ENCODE measurements at regions of chr4 and their contacts with region 1.

Region 1: DNA sequence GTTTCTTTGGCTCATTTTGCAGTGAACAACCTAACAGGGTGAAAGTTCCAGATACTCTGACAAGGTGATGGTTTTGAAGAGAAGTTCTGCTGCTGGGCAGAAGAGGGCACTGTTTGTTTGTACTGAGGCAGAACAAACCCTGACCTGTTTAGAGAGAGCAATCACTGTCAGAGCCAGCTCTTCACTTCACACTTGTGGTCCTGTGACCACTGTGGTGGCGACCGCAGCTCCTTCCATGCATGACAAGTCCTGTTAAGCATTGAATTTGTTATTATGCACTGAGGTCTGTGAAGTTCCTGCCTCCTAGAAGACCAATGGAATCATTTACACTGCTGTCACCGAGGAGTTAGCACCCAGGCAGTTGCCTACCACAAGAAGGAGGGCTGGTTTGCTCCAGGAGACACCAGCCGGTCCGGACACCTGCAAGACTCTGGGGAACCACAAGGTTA is 86.6 kb downstream of the ZNF330 start:
- DNase-seq: peak; percentile 74
- H3K4me3 Mint-ChIP-seq: no peak overlapping the region
- H3K27ac Mint-ChIP-seq: no peak overlapping the region
- H3K4me1 Mint-ChIP-seq: peaks cover 2% of the 10 kb centered on the region
- H3K27me3 Mint-ChIP-seq: peaks cover 6% of the 10 kb centered on the region

Region 2: DNA sequence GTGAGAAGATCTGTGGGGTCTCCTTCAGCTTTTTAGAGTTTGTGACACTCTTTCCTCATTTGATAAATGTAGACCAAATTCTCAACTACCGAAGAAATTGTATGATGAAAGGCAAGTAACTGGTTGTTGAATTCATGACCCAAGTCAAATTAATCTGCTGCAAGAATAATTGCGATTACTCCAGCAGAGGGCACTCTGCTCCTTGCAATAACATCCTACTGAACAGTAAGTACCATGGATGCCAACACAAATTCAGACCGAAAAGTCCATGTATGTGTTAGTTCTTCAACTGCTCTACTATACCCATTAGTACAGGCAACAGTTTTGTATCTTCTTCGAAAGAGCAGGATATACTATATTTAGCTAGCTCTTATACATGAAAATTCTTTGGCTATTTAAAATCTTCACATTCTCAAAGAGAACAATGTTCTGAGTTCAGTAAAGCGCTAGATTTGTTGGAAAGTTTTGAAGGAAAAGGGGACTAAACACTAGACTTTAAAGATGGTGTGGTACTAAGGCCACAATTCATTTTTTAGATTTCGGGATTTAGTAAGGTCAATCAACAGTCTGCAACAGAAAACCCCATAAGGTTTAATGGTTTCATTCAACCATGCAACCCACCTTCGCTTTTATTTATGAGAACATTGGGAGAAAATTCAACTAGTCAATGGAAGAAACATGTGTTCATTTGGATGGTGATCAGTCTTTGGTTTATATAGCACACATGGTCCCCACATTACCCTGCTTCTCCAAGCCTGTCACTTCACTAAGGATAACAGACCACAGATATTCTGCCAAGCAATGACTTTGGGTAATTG is 445.7 kb before region 1 on chr4:
- CTCF ChIA-PET with region 1: no interaction called
- intact Hi-C with region 1: loop called (anchors 10 kb)
- DNase-seq: peak; percentile 79
- H3K4me3 Mint-ChIP-seq: no peak overlapping the region
- H3K27ac Mint-ChIP-seq: no peak overlapping the region
- H3K4me1 Mint-ChIP-seq: no peaks in the 10 kb centered on the region
- H3K27me3 Mint-ChIP-seq: no peaks in the 10 kb centered on the region

Region 3: DNA sequence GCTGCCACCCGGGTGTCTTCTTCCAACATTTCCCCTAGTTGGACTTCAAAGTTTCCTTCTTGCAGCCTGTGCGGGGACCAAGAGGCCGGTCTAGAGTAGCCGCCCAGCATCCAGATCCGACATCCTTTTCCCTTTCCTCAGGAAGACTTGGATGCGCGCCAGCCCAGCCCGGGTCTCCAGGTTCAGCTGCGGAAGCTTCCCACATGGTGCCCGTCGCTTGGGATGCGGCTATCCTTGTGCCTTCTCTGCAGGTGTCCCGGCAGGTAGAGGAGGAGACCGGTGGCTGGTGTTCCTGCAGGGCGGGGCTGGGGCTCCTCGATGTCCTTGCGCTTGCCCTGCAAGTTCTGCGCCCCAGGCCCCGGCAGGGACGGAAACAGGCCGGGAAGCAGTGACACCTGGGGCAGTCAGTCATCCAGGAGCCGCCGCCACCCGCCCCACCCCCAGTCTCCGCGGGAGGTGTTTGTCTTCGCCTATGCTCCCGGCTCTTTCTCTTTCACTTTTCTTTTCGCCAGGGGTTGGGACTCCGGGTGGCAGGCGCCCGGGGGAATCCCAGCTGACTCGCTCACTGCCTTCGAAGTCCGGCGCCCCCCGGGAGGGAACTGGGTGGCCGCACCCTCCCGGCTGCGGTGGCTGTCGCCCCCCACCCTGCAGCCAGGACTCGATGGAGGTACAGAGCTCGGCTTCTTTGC is 329.0 kb after region 1 on chr4 and contains the start of gene IL15:
- CTCF ChIA-PET with region 1: no interaction called
- intact Hi-C with region 1: loop called (anchors 10 kb)
- DNase-seq: peak; percentile 86
- H3K4me3 Mint-ChIP-seq: peak within 1 kb of the TSS; percentile 89
- H3K27ac Mint-ChIP-seq: no peak within 1 kb of the TSS
- H3K4me1 Mint-ChIP-seq: peaks cover 10% of the 10 kb centered on the region
- H3K27me3 Mint-ChIP-seq: peaks cover 9% of the 10 kb centered on the region
- total RNA-seq, gene IL15: 0.19 to 0.52 TPM

Region 4: GRCh38 chr4:141657553-141658250 is 350.4 kb after region 1 on chr4:
- CTCF ChIA-PET with region 1: no interaction called
- intact Hi-C with region 1: loop called (anchors 2 kb)
- DNase-seq: no peak
- H3K4me3 Mint-ChIP-seq: no peak overlapping the region
- H3K27ac Mint-ChIP-seq: no peak overlapping the region
- H3K4me1 Mint-ChIP-seq: peaks cover 2% of the 10 kb centered on the region
- H3K27me3 Mint-ChIP-seq: no peaks in the 10 kb centered on the region

Region 5: GRCh38 chr4:141711014-141711610 is 403.8 kb after region 1 on chr4:
- CTCF ChIA-PET with region 1: interaction called, 3 read pairs
- intact Hi-C with region 1: loop called (anchors 2 kb)
- DNase-seq: peak; percentile 11
- H3K4me3 Mint-ChIP-seq: no peak overlapping the region
- H3K27ac Mint-ChIP-seq: no peak overlapping the region
- H3K4me1 Mint-ChIP-seq: no peaks in the 10 kb centered on the region
- H3K27me3 Mint-ChIP-seq: no peaks in the 10 kb centered on the region

Measured in activated naive CD4-positive, alpha-beta T cell treated with anti-CD3 and anti-CD28 coated beads for 36 hours (primary cell).